CD8-positive, alpha-beta T cell (primary cell): ENCODE measurements at regions of chr11 and their contacts with region 1.

Region 1: DNA sequence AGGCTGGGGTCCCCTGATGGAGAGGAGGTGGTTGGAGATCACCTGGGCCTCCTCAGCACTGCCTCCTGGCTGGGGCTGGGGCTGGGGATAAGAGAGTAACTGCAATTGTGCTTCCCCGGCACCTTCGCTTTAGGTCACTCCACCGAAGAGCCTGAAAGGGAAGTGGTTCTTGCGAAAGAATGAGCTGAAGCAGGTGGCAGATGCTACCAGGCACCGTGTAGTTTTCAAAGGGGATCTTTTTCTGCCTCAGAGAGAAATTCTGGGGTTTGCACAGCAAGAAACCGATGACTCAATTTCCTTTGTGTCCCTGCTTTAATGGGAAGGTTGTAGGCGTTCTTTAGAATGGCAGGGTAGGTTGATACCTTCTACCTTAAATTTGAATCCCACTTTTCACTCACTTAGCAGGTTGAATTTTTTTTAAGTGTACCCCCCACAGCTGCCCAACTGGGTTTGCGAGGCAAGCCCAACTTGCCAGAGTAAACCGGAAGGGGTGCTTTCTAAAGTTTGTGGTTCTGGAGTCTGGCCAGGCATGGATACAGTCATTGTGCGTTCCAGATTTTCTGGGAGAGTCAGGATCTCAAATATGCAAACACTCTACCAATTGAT is 5.3 kb downstream of the CD44 start:
- DNase-seq: peak in 8 of 9 experiments; percentile 35 to 89 (median 70)
- ATAC-seq: peak; percentile 51
- H3K4me3 ChIP-seq: peak overlapping the region; percentile 37 to 46
- H3K4me3 Mint-ChIP-seq: peak overlapping the region; percentile 79
- H3K27ac ChIP-seq: peak overlapping the region; percentile 54 to 77
- H3K27ac Mint-ChIP-seq: peak overlapping the region; percentile 98
- H3K4me1 ChIP-seq: peaks cover 70% of the 10 kb centered on the region
- H3K4me1 Mint-ChIP-seq: peaks cover 80% of the 10 kb centered on the region
- H3K27me3 ChIP-seq: no peaks in the 10 kb centered on the region
- H3K27me3 Mint-ChIP-seq: no peaks in the 10 kb centered on the region
- CTCF ChIP-seq: no peak

Region 2: GRCh38 chr11:34114471-34114870 is 1029.8 kb before region 1 on chr11:
- CTCF ChIA-PET with region 1: no interaction called
- POLR2A ChIA-PET with region 1: no interaction called
- intact Hi-C with region 1: no loop called
- DNase-seq: no peak
- ATAC-seq: no peak
- H3K4me3 ChIP-seq: no peak overlapping the region
- H3K4me3 Mint-ChIP-seq: no peak overlapping the region
- H3K27ac ChIP-seq: no peak overlapping the region
- H3K27ac Mint-ChIP-seq: no peak overlapping the region
- H3K4me1 ChIP-seq: no peaks in the 10 kb centered on the region
- H3K4me1 Mint-ChIP-seq: peaks cover 13% of the 10 kb centered on the region
- H3K27me3 ChIP-seq: no peaks in the 10 kb centered on the region
- H3K27me3 Mint-ChIP-seq: no peaks in the 10 kb centered on the region
- CTCF ChIP-seq: no peak

Region 3: DNA sequence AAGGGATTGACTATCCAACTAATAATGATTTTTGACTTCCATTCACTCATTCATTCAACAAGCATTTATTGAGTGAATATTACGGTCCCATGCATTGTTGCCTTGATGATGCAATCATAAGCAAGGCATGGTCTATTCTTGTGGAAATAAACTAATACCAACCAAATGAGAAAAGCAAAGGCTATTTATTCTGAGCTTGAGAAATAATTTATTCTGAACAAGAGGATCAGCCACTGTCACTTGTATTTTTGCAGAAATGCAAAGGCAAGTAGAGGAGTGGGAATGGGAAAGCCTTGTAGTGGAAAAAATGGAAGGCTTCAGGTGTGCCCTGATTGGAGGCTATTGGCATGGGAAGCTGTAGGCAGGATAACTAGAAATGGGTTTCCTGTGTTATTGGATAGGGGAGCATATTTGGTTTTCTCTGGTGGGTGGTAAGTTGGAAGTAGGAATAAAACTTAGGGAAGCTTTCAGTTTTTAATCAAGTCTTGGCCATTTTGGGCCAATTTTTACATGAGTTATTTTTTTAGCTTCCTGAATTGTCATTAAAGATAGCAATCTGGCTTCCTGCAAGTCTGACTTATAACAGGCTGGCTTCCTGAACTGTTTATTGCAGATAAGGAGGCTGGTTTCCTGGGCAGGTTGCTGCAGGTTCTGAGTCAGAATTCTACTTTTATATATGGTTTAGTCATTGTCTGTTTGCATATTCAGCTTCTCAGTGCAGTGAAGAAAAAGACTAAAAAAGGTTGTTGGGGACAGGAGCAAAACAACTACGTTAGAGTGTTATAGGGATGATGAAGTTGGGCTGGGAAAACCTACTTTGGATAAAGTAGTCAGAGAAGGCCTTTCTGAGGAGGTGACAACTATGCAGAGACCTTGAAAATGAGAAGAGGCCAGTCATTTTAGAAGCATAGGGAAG is 334.8 kb before region 1 on chr11:
- CTCF ChIA-PET with region 1: no interaction called
- POLR2A ChIA-PET with region 1: no interaction called
- intact Hi-C with region 1: no loop called
- DNase-seq: no peak
- ATAC-seq: no peak
- H3K4me3 ChIP-seq: no peak overlapping the region
- H3K4me3 Mint-ChIP-seq: no peak overlapping the region
- H3K27ac ChIP-seq: no peak overlapping the region
- H3K27ac Mint-ChIP-seq: no peak overlapping the region
- H3K4me1 ChIP-seq: no peaks in the 10 kb centered on the region
- H3K4me1 Mint-ChIP-seq: no peaks in the 10 kb centered on the region
- H3K27me3 ChIP-seq: no peaks in the 10 kb centered on the region
- H3K27me3 Mint-ChIP-seq: peaks cover 42% of the 10 kb centered on the region
- CTCF ChIP-seq: no peak

Region 4: GRCh38 chr11:35158701-35159510 is 14.7 kb after region 1 on chr11:
- CTCF ChIA-PET with region 1: interaction called, 92 read pairs
- POLR2A ChIA-PET with region 1: interaction called, 31 read pairs
- intact Hi-C with region 1: loop called (anchors 1 to 2 kb)
- DNase-seq: peak in 1 of 9 experiments; percentile 13
- ATAC-seq: no peak
- H3K4me3 ChIP-seq: no peak overlapping the region
- H3K4me3 Mint-ChIP-seq: peak overlapping the region; percentile 38
- H3K27ac ChIP-seq: peak overlapping the region; percentile 17 to 97
- H3K27ac Mint-ChIP-seq: peak overlapping the region; percentile 100
- H3K4me1 ChIP-seq: peaks cover 97% of the 10 kb centered on the region
- H3K4me1 Mint-ChIP-seq: peaks cover 100% of the 10 kb centered on the region
- H3K27me3 ChIP-seq: no peaks in the 10 kb centered on the region
- H3K27me3 Mint-ChIP-seq: no peaks in the 10 kb centered on the region
- CTCF ChIP-seq: no peak

Region 5: DNA sequence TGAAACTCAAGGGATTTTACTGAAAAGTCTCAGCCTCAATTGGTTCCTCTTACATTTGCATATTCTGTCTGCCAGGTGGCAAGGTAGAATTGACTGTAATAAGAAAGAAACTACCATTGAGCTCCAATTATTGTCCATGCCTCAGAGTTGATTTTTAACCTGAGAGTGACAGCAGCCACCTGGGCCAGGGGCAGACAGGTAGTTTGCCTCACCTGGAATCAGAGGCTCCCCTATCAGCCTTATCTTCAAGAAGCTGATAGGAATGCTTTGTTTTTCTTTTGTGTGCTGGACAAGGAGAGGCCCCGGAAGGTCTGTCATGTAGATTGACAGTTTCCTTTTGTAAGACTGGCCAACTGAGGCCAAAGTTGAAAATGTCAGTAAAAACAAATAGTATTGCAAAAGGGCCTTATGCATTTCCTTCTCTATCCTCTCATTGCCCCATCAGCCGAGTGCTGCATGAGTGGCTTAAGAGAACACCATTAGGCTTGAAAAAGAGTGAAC is 28.8 kb after region 1 on chr11:
- CTCF ChIA-PET with region 1: interaction called, 92 read pairs
- POLR2A ChIA-PET with region 1: interaction called, 42 read pairs
- intact Hi-C with region 1: loop called in 1 of 2 experiments (anchors 1 kb)
- DNase-seq: peak in 1 of 9 experiments; percentile 37
- ATAC-seq: no peak
- H3K4me3 ChIP-seq: peak overlapping the region in 1 of 2 experiments; percentile 10
- H3K4me3 Mint-ChIP-seq: peak overlapping the region; percentile 68
- H3K27ac ChIP-seq: peak overlapping the region; percentile 54 to 97
- H3K27ac Mint-ChIP-seq: peak overlapping the region; percentile 100
- H3K4me1 ChIP-seq: peaks cover 95% of the 10 kb centered on the region
- H3K4me1 Mint-ChIP-seq: peaks cover 96% of the 10 kb centered on the region
- H3K27me3 ChIP-seq: no peaks in the 10 kb centered on the region
- H3K27me3 Mint-ChIP-seq: no peaks in the 10 kb centered on the region
- CTCF ChIP-seq: no peak

Region 6: GRCh38 chr11:35237860-35238715 is 93.8 kb after region 1 on chr11:
- CTCF ChIA-PET with region 1: interaction called, 3 read pairs
- POLR2A ChIA-PET with region 1: interaction called, 3 read pairs
- intact Hi-C with region 1: loop called in 1 of 2 experiments (anchors 5 kb)
- DNase-seq: peak in 7 of 9 experiments; percentile 29 to 84 (median 62)
- ATAC-seq: no peak
- H3K4me3 ChIP-seq: no peak overlapping the region
- H3K4me3 Mint-ChIP-seq: no peak overlapping the region
- H3K27ac ChIP-seq: no peak overlapping the region
- H3K27ac Mint-ChIP-seq: no peak overlapping the region
- H3K4me1 ChIP-seq: peaks cover 46% of the 10 kb centered on the region
- H3K4me1 Mint-ChIP-seq: peaks cover 87% of the 10 kb centered on the region
- H3K27me3 ChIP-seq: no peaks in the 10 kb centered on the region
- H3K27me3 Mint-ChIP-seq: no peaks in the 10 kb centered on the region
- CTCF ChIP-seq: peak; percentile 65